Right lobe of liver (tissue), 6 donors: ENCODE measurements at regions of chr11 and their contacts with region 1.

Region 1: GRCh38 chr11:15649371-15650104 is 534.8 kb downstream of the INSC start:
- DNase-seq: no peak
- ATAC-seq: no peak
- H3K4me3 ChIP-seq: no peak overlapping the region
- H3K27ac ChIP-seq: no peak overlapping the region
- H3K4me1 ChIP-seq: peaks cover 0 to 5% (median 3%) of the 10 kb centered on the region in 4 donors
- H3K27me3 ChIP-seq: no peaks in the 10 kb centered on the region
- CTCF ChIP-seq: no peak
- POLR2A ChIP-seq: no peak

Region 2: GRCh38 chr11:15327786-15328231 is 321.7 kb before region 1 on chr11:
- intact Hi-C with region 1: loop called in 1 of 2 experiments (anchors 10 kb)
- DNase-seq: peak; percentile 57 to 67 (median 66)
- ATAC-seq: peak; percentile 93 to 96 (median 93)
- H3K4me3 ChIP-seq: no peak overlapping the region
- H3K27ac ChIP-seq: no peak overlapping the region
- H3K4me1 ChIP-seq: no peaks in the 10 kb centered on the region
- H3K27me3 ChIP-seq: no peaks in the 10 kb centered on the region
- CTCF ChIP-seq: peak; percentile 66 to 81 (median 70)
- POLR2A ChIP-seq: no peak